ENCODE measurements at regions of chr2 and their contacts with region 1.

Region 1: DNA sequence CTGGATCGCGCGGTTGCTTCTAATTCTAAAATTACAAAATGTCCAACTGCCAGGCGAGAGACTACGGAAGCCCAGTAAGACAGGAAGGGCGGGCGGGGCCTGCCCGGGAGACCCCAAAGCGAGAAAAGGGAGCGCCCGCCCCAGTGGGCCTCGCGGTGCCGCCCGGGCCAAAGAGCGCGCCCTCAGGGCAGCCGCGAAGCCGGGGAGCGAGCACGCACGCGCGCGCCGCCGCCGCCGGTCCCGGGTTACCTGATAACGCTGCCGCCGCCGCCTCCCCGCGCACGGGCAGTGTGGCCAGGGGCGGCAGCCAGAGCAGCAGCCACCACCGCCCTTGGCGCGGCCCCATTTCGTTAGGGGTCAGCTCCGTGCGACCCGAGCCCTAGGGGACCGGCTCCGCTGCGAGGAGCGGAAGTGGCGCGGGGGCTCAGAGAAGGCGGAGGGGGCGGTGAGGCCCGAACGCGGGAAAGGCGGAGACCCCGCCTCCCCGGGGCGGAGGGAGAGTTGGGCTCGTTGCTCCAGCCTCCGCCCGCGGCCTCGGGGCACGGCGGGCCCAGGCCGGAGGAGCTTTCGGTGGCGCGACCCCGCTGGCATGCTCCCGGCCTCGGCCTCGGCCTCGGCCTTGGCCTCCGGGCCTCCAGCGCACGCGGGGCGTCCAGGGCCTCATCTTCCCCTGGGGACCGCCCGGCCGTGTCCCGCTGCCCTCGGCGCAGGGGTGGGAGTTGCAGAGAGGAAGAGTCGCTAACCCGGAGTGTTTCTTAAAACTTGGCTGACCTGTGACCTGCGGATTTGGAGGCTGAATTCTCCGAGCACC is at the start of gene NEMP2:
- DNase-seq: peak; percentile 74 to 85 (median 78)
- H3K4me3 ChIP-seq: peak within 1 kb of the TSS; percentile 44 to 78 (median 76)
- H3K27ac ChIP-seq: peak within 1 kb of the TSS; percentile 37 to 95 (median 91)
- H3K4me1 ChIP-seq: peaks cover 0 to 17% of the 10 kb centered on the region in 2 donors
- H3K27me3 ChIP-seq: no peaks in the 10 kb centered on the region
- CTCF ChIP-seq: peak in 1 of 6 experiments; percentile 27
- POLR2A ChIP-seq: peak; percentile 33 to 71
- total RNA-seq, gene NEMP2: 2.5 to 8.4 (median 5.2) TPM

Region 2: GRCh38 chr2:190093793-190094192 is 440.7 kb before region 1 on chr2:
- intact Hi-C with region 1: no loop called
- DNase-seq: peak in 5 of 7 donors; percentile 10 to 41 (median 19)
- H3K4me3 ChIP-seq: no peak overlapping the region
- H3K27ac ChIP-seq: peak overlapping the region in 3 of 5 donors; percentile 3 to 33 (median 27)
- H3K4me1 ChIP-seq: peaks cover 0 to 22% of the 10 kb centered on the region in 2 donors
- H3K27me3 ChIP-seq: no peaks in the 10 kb centered on the region
- CTCF ChIP-seq: no peak
- POLR2A ChIP-seq: no peak

Region 3: GRCh38 chr2:190648289-190649034 is 113.9 kb after region 1 on chr2:
- intact Hi-C with region 1: loop called (anchors 10 kb)
- DNase-seq: peak; percentile 88 to 93 (median 90)
- H3K4me3 ChIP-seq: peak overlapping the region in 3 of 4 donors; percentile 23 to 96 (median 45)
- H3K27ac ChIP-seq: peak overlapping the region; percentile 25 to 95 (median 61)
- H3K4me1 ChIP-seq: peaks cover 5 to 37% of the 10 kb centered on the region in 2 donors
- H3K27me3 ChIP-seq: no peaks in the 10 kb centered on the region
- CTCF ChIP-seq: no peak
- POLR2A ChIP-seq: peak; percentile 50 to 57